ENCODE measurements at regions of chr11 and their contacts with region 1.

Region 1: DNA sequence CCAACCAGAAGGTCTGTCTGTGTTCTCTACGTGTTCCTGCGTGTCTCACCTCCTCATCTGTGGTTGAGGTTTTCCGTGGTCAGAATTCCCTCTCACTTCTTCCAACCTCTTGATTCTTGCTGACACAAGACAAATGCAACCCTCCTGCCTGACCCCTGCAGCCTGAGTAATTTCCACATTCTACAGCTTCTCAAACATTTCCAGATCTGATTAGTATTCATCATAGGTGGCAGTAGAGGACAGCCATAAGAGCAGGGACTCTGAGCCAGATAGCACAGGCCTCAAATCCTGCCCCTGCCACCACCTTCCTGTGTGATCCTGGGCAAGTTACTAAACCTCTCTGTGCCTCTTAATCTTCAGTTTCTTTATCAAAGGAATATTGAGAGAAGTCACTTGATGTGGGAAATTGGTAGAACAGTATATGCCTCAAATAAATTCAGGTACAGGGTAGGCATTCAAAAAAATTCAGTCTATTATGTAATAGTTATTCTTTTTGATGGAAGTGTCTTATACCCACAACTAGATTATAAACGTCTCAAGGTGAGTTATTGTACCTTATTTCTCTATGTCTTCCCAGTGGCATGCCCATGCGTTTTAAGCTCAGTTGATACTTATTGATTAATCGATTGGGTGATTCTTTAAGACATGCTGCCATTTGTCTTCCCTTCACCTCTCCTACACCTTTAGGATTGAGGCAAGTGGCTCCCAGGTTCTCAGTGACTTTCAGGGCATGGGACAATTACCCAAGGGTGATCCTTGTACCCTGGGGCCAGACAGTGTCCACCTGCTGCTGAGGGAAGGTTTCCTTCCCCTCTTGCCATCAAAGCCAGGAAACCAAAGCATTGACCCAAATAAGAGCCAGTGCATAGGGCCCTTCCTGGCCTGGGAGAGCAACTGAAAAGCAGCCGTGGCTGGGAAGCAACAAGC is 19.6 kb downstream of the POU2AF1 start:
- DNase-seq: peak; percentile 74
- ATAC-seq: peak; percentile 28
- H3K4me3 ChIP-seq: peak overlapping the region in 1 of 3 experiments; percentile 19; a peak in 1 of 6 replicates
- H3K27ac ChIP-seq: peak overlapping the region; percentile 98
- H3K4me1 ChIP-seq: peaks cover 100% of the 10 kb centered on the region
- H3K27me3 ChIP-seq: no peaks in the 10 kb centered on the region
- CTCF ChIP-seq: peak; percentile 65
- EP300 ChIP-seq: peak in 1 of 2 experiments; percentile 17; a peak in 1 of 4 replicates
- POLR2A ChIP-seq: no peak
- RAD21 ChIP-seq: peak; percentile 63; the same call in 1 of the 2 replicates

Region 2: GRCh38 chr11:111283945-111284481 is 75.5 kb before region 1 on chr11:
- CTCF ChIA-PET with region 1: interaction called, 5 read pairs
- POLR2A ChIA-PET with region 1: no interaction called
- in situ Hi-C with region 1: no loop called
- intact Hi-C with region 1: loop called (anchors 1 kb)
- DNase-seq: no peak
- ATAC-seq: no peak
- H3K4me3 ChIP-seq: no peak overlapping the region
- H3K27ac ChIP-seq: no peak overlapping the region
- H3K4me1 ChIP-seq: peaks cover 74% of the 10 kb centered on the region
- H3K27me3 ChIP-seq: 0 out of 5 replicates have a peak, but pooled peaks cover 0 to 5% of the 10 kb centered on the region in 2 experiments
- CTCF ChIP-seq: no peak
- EP300 ChIP-seq: no peak
- POLR2A ChIP-seq: no peak
- RAD21 ChIP-seq: no peak

Region 3: DNA sequence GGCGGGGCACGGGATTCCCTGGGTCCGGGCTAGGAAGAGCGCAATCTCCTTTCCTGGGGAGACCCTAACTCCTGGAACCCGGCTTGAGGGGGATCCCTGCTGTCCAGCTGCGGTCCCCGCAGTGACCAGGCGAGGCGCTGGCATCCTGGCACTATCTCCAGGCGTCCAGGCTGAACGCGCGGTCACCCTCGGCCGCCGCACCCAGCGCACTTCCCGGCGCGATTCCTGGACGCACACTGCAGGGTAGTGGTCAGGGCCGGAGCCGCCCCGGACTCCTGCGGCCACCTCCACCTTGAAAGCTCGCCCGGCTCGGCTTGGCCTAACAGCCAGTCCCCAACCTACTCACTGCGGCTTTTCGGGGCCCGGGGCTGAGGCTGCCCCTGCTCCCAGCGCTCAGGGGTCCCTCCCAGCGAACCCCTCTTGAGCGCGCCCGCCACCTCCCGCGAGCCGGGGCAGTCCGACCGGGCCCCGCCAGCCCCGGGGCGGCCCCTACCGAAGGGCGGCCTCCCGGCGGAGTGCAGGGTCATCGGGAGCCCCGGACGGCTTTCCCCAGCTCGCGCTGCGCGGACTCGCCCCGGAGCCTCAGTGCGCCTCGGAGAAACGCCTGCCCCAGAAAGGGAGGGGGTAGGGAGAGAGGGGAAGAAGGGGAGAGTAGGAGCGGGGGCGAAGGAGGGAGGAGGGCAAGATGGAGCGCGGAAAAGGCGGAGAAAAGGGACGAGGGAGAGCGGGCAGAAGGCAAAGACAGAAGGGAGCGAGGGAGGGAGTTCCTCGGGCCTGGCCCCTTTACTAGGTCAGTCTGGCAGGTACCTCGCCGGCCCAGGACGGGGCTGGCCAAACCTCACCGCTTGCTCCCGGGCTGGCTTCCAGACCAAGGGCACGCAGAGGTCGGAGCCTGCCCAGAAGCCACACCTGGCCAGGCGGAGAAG is 60.1 kb before region 1 on chr11:
- CTCF ChIA-PET with region 1: interaction called, 4 read pairs
- POLR2A ChIA-PET with region 1: interaction called, 21 read pairs
- in situ Hi-C with region 1: loop called (anchors 5 kb)
- intact Hi-C with region 1: loop called (anchors 2 kb)
- DNase-seq: peak; percentile 46
- ATAC-seq: peak; percentile 94
- H3K4me3 ChIP-seq: peak overlapping the region; percentile 62 to 78 (median 72)
- H3K27ac ChIP-seq: peak overlapping the region; percentile 81
- H3K4me1 ChIP-seq: peaks cover 68% of the 10 kb centered on the region
- H3K27me3 ChIP-seq: no peaks in the 10 kb centered on the region
- CTCF ChIP-seq: peak; percentile 80
- EP300 ChIP-seq: no peak
- POLR2A ChIP-seq: peak; percentile 61 to 66; a peak in 3 of 4 replicates
- RAD21 ChIP-seq: peak; percentile 92

Region 4: GRCh38 chr11:111320728-111321568 is 38.5 kb before region 1 on chr11:
- CTCF ChIA-PET with region 1: no interaction called
- POLR2A ChIA-PET with region 1: interaction called, 11 read pairs
- in situ Hi-C with region 1: no loop called
- intact Hi-C with region 1: no loop called
- DNase-seq: peak; percentile 83
- ATAC-seq: peak; percentile 97
- H3K4me3 ChIP-seq: peak overlapping the region in 1 of 3 experiments; percentile 36; a peak in 1 of 6 replicates
- H3K27ac ChIP-seq: peak overlapping the region; percentile 70
- H3K4me1 ChIP-seq: peaks cover 43% of the 10 kb centered on the region
- H3K27me3 ChIP-seq: no peaks in the 10 kb centered on the region
- CTCF ChIP-seq: no peak
- EP300 ChIP-seq: peak in 1 of 2 experiments; percentile 25; a peak in 1 of 4 replicates
- POLR2A ChIP-seq: peak in 1 of 2 experiments; percentile 49; a peak in 1 of 4 replicates
- RAD21 ChIP-seq: no peak

Region 5: GRCh38 chr11:111395081-111395480 is 35.6 kb after region 1 on chr11:
- CTCF ChIA-PET with region 1: no interaction called
- POLR2A ChIA-PET with region 1: interaction called, 5 read pairs
- in situ Hi-C with region 1: no loop called
- intact Hi-C with region 1: loop called (anchors 2 kb)
- DNase-seq: peak; percentile 93
- ATAC-seq: peak; percentile 100
- H3K4me3 ChIP-seq: no peak overlapping the region
- H3K27ac ChIP-seq: peak overlapping the region; percentile 54
- H3K4me1 ChIP-seq: peaks cover 77% of the 10 kb centered on the region
- H3K27me3 ChIP-seq: no peaks in the 10 kb centered on the region
- CTCF ChIP-seq: peak; percentile 46
- EP300 ChIP-seq: peak in 1 of 2 experiments; percentile 73; a peak in 2 of 4 replicates
- POLR2A ChIP-seq: peak; percentile 40 to 46; a peak in 2 of 4 replicates
- RAD21 ChIP-seq: peak; percentile 73

Region 6: DNA sequence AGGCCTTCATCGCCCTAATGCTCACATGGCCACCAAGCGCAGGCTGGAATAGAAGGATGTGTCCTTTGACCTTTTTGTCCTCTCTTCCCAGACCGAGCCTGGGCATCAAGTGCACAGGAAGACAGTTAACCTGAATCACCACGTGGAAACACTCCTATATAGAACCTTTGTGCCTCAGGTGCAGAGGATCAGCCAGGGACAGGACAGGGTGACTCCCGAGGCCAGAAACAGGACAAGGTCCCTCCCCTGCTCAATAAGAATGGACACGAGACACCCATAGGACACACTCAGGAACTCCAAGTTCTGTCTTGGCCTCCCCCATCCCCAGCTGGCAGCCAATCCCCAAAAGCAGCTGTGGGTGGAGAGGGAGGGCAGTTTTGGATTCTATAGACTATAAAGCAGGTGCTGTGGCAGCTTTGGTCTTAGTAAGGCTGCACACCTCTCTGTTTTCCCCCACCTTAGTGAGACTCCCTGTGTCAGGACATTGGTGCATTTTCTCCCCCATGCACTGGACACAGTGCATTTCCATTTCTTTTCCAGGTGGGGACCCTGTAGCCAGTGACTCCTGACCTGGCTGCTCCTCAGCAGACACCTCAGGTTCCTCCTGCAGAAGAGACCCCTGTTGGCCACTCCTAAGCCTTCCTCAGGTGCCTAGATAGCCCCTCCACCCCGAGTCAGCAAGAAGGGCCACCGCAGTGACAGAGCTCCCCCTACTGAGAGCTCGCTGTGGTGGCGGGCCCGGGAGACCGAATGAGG is 63.2 kb after region 1 on chr11:
- CTCF ChIA-PET with region 1: interaction called, 23 read pairs
- POLR2A ChIA-PET with region 1: interaction called, 15 read pairs
- in situ Hi-C with region 1: loop called (anchors 5 kb)
- intact Hi-C with region 1: loop called (anchors 1 kb)
- DNase-seq: peak; percentile 82
- ATAC-seq: peak; percentile 98
- H3K4me3 ChIP-seq: no peak overlapping the region
- H3K27ac ChIP-seq: peak overlapping the region; percentile 18
- H3K4me1 ChIP-seq: peaks cover 64% of the 10 kb centered on the region
- H3K27me3 ChIP-seq: no peaks in the 10 kb centered on the region
- CTCF ChIP-seq: peak; percentile 100
- EP300 ChIP-seq: peak; percentile 52 to 66; a peak in 2 of 4 replicates
- POLR2A ChIP-seq: no peak
- RAD21 ChIP-seq: peak; percentile 100

Region 7: GRCh38 chr11:111469200-111469599 is 109.7 kb after region 1 on chr11:
- CTCF ChIA-PET with region 1: no interaction called
- POLR2A ChIA-PET with region 1: no interaction called
- in situ Hi-C with region 1: no loop called
- intact Hi-C with region 1: no loop called
- DNase-seq: no peak
- ATAC-seq: no peak; the same call in 2 of the 3 replicates
- H3K4me3 ChIP-seq: no peak overlapping the region
- H3K27ac ChIP-seq: no peak overlapping the region
- H3K4me1 ChIP-seq: no peaks in the 10 kb centered on the region
- H3K27me3 ChIP-seq: peaks cover 2 to 6% of the 10 kb centered on the region in 2 experiments; a peak in 2 of 5 replicates
- CTCF ChIP-seq: no peak
- EP300 ChIP-seq: no peak
- POLR2A ChIP-seq: no peak
- RAD21 ChIP-seq: no peak

Measured in HepG2 (cell line).